Panc1 (cell line): ENCODE measurements at regions of chr1 and their contacts with region 1.

Region 1: DNA sequence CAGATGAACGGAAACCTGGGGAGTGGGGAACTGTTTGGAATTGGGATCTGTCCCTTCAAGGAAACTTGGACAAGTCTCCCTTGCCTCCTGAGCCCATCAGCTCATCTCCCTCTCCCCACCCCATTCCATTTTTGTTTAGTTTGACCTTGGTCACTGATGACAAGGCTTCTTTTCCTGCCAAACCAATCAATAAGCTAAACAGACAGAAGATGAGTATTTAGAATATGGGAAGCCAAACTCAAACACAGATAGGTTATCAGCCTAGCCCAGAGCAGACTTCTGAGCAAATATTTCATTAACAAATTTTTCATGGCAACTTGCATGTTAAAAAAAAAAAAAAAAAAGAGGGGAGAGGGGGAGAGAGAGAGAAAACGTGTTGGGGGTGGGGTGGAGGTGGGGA is 337.2 kb upstream of the PROX1 start:
- DNase-seq: no peak
- ATAC-seq: no peak
- H3K4me3 ChIP-seq: no peak overlapping the region
- H3K27ac ChIP-seq: no peak overlapping the region
- H3K4me1 ChIP-seq: no peaks in the 10 kb centered on the region
- H3K27me3 ChIP-seq: no peaks in the 10 kb centered on the region
- CTCF ChIP-seq: no peak

Region 2: DNA sequence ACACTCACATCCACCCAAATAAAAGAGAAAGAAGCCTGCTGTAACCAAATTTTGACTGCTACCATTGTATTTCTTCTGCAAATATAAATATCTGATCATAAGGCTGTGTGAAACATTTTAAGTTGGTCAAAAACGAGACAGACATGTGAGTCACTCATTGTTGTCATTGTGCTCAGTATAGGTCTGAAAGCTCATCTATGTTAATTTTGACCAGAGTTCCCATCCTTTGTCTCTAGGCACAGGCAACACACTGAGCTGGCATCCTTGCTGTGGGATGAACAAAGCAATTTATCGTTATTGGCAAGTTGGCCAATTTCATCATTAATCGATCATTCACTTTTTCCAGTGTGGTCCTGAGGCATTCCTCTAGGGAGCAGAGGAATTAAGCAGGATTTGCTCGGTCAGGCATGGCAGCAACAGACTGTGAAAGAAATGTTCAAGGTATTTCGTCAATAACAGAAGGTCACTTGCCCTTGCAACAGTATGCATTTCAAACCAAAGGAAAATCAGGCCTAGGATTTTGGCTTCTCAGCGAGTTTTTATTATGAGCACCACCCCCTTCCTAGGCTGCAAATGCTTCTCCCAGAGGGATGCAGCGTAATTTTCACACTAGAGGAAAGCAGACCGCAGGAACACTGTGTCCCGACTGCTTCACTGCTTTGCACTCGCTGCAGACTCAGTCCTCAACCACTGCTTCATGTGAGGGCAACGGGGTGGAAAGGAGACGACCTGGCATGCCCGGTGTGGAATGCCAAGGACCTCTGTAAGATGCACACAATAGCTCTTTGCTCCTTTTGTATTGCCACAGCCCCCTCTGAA is 542.4 kb after region 1 on chr1:
- CTCF ChIA-PET with region 1: no interaction called
- POLR2A ChIA-PET with region 1: interaction called, 18 read pairs
- in situ Hi-C with region 1: no loop called
- intact Hi-C with region 1: no loop called
- DNase-seq: no peak
- ATAC-seq: no peak
- H3K4me3 ChIP-seq: no peak overlapping the region
- H3K27ac ChIP-seq: no peak overlapping the region
- H3K4me1 ChIP-seq: no peaks in the 10 kb centered on the region
- H3K27me3 ChIP-seq: peaks cover 24% of the 10 kb centered on the region
- CTCF ChIP-seq: no peak